CD4-positive, alpha-beta T cell (primary cell): ENCODE measurements at regions of chr6 and their contacts with region 1.

Region 1: GRCh38 chr6:13614926-13615798 is at the start of gene NOL7:
- DNase-seq: peak; percentile 97 to 99 (median 98)
- ATAC-seq: peak; percentile 91
- H3K4me3 ChIP-seq: peak within 1 kb of the TSS; percentile 80
- H3K4me3 Mint-ChIP-seq: peak within 1 kb of the TSS; percentile 94
- H3K27ac ChIP-seq: peak within 1 kb of the TSS; percentile 75 to 85
- H3K27ac Mint-ChIP-seq: peak within 1 kb of the TSS; percentile 93
- H3K4me1 ChIP-seq: peaks cover 26% of the 10 kb centered on the region
- H3K4me1 Mint-ChIP-seq: peaks cover 50% of the 10 kb centered on the region
- H3K27me3 ChIP-seq: no peaks in the 10 kb centered on the region
- H3K27me3 Mint-ChIP-seq: no peaks in the 10 kb centered on the region
- CTCF ChIP-seq: peak; percentile 85
- total RNA-seq, gene NOL7: 65.5 to 67.6 TPM

Region 2: GRCh38 chr6:13328076-13328874 is 286.9 kb before region 1 on chr6 and contains the start of gene TBC1D7:
- CTCF ChIA-PET with region 1: interaction called, 9 read pairs
- POLR2A ChIA-PET with region 1: interaction called, 22 read pairs
- intact Hi-C with region 1: loop called (anchors 5 kb)
- DNase-seq: peak; percentile 85 to 97 (median 92)
- ATAC-seq: peak; percentile 87
- H3K4me3 ChIP-seq: peak within 1 kb of the TSS; percentile 91
- H3K4me3 Mint-ChIP-seq: peak within 1 kb of the TSS; percentile 97
- H3K27ac ChIP-seq: peak within 1 kb of the TSS; percentile 88 to 95
- H3K27ac Mint-ChIP-seq: peak within 1 kb of the TSS; percentile 99
- H3K4me1 ChIP-seq: peaks cover 13% of the 10 kb centered on the region
- H3K4me1 Mint-ChIP-seq: peaks cover 38% of the 10 kb centered on the region
- H3K27me3 ChIP-seq: no peaks in the 10 kb centered on the region
- H3K27me3 Mint-ChIP-seq: no peaks in the 10 kb centered on the region
- CTCF ChIP-seq: no peak
- total RNA-seq, gene TBC1D7: 10.2 to 12.3 TPM

Region 3: GRCh38 chr6:13574149-13574570 is 41.0 kb before region 1 on chr6:
- CTCF ChIA-PET with region 1: interaction called, 59 read pairs
- POLR2A ChIA-PET with region 1: interaction called, 102 read pairs
- intact Hi-C with region 1: loop called (anchors 1 to 2 kb)
- DNase-seq: peak; percentile 85 to 98 (median 91)
- ATAC-seq: peak; percentile 79
- H3K4me3 ChIP-seq: peak overlapping the region; percentile 97
- H3K4me3 Mint-ChIP-seq: peak overlapping the region; percentile 98
- H3K27ac ChIP-seq: peak overlapping the region; percentile 82 to 86
- H3K27ac Mint-ChIP-seq: peak overlapping the region; percentile 99
- H3K4me1 ChIP-seq: peaks cover 14% of the 10 kb centered on the region
- H3K4me1 Mint-ChIP-seq: peaks cover 34% of the 10 kb centered on the region
- H3K27me3 ChIP-seq: no peaks in the 10 kb centered on the region
- H3K27me3 Mint-ChIP-seq: no peaks in the 10 kb centered on the region
- CTCF ChIP-seq: peak; percentile 72

Region 4: DNA sequence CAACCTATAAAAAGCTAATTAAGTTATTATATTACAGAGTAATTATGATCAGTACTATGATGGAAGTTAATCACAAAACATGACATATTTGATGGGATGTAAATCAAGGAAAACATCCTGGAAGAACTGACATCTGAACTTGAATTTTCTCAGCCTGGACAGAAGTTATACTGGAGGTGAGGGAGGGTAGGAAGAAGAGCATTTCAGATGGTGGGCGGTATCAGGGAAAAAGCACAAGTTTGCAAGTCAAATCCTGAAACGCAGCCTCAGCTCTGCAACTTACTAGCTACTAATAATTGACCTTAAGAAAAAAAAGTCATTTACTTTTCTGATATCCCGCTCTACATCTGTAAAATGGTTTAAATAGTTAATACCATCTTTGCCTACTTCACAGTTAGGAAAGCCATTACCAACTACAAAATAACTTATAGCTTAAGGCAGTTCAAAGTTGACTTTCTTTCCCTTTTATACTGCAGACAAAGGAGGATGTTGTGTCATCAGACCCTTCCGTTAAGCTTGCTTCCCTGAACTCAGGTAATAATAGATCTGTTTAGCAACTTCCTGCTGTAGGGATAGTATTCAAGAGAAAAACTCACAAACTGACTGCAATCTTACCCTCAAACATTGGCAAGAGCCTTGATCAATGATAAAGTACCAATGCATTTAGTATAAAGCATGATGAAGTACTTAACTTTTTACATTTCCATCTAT is 20.9 kb after region 1 on chr6:
- CTCF ChIA-PET with region 1: interaction called, 10 read pairs
- POLR2A ChIA-PET with region 1: interaction called, 22 read pairs
- intact Hi-C with region 1: no loop called
- DNase-seq: peak in 2 of 14 experiments; percentile 13 to 34
- ATAC-seq: peak; percentile 71
- H3K4me3 ChIP-seq: no peak overlapping the region
- H3K4me3 Mint-ChIP-seq: no peak overlapping the region
- H3K27ac ChIP-seq: peak overlapping the region in 1 of 2 donors; percentile 24
- H3K27ac Mint-ChIP-seq: peak overlapping the region; percentile 72
- H3K4me1 ChIP-seq: peaks cover 3% of the 10 kb centered on the region
- H3K4me1 Mint-ChIP-seq: peaks cover 44% of the 10 kb centered on the region
- H3K27me3 ChIP-seq: no peaks in the 10 kb centered on the region
- H3K27me3 Mint-ChIP-seq: no peaks in the 10 kb centered on the region
- CTCF ChIP-seq: no peak

Region 5: GRCh38 chr6:13687917-13688351 is 72.8 kb after region 1 on chr6:
- CTCF ChIA-PET with region 1: interaction called, 4 read pairs
- POLR2A ChIA-PET with region 1: interaction called, 24 read pairs
- intact Hi-C with region 1: no loop called
- DNase-seq: peak in 10 of 14 experiments; percentile 7 to 69 (median 28)
- ATAC-seq: peak; percentile 83
- H3K4me3 ChIP-seq: no peak overlapping the region
- H3K4me3 Mint-ChIP-seq: peak overlapping the region; percentile 79
- H3K27ac ChIP-seq: peak overlapping the region; percentile 64 to 83
- H3K27ac Mint-ChIP-seq: peak overlapping the region; percentile 87
- H3K4me1 ChIP-seq: peaks cover 43% of the 10 kb centered on the region
- H3K4me1 Mint-ChIP-seq: peaks cover 64% of the 10 kb centered on the region
- H3K27me3 ChIP-seq: no peaks in the 10 kb centered on the region
- H3K27me3 Mint-ChIP-seq: no peaks in the 10 kb centered on the region
- CTCF ChIP-seq: no peak

Region 6: GRCh38 chr6:13711733-13712598 is 96.8 kb after region 1 on chr6 and contains the start of gene RANBP9:
- CTCF ChIA-PET with region 1: interaction called, 19 read pairs
- POLR2A ChIA-PET with region 1: interaction called, 129 read pairs
- intact Hi-C with region 1: loop called (anchors 1 kb)
- DNase-seq: peak; percentile 76 to 95 (median 85)
- ATAC-seq: peak; percentile 81
- H3K4me3 ChIP-seq: peak within 1 kb of the TSS; percentile 80
- H3K4me3 Mint-ChIP-seq: peak within 1 kb of the TSS; percentile 96
- H3K27ac ChIP-seq: peak within 1 kb of the TSS; percentile 78 to 81
- H3K27ac Mint-ChIP-seq: peak within 1 kb of the TSS; percentile 98
- H3K4me1 ChIP-seq: peaks cover 26% of the 10 kb centered on the region
- H3K4me1 Mint-ChIP-seq: peaks cover 52% of the 10 kb centered on the region
- H3K27me3 ChIP-seq: no peaks in the 10 kb centered on the region
- H3K27me3 Mint-ChIP-seq: no peaks in the 10 kb centered on the region
- CTCF ChIP-seq: no peak
- total RNA-seq, gene RANBP9: 60.8 to 62.9 TPM

Region 7: GRCh38 chr6:13814176-13814937 is 199.2 kb after region 1 on chr6 and contains the start of gene MCUR1:
- CTCF ChIA-PET with region 1: interaction called, 9 read pairs
- POLR2A ChIA-PET with region 1: interaction called, 10 read pairs
- intact Hi-C with region 1: loop called in 1 of 2 experiments (anchors 5 kb)
- DNase-seq: peak; percentile 54 to 94 (median 73)
- ATAC-seq: peak; percentile 83
- H3K4me3 ChIP-seq: peak within 1 kb of the TSS; percentile 70
- H3K4me3 Mint-ChIP-seq: peak within 1 kb of the TSS; percentile 90
- H3K27ac ChIP-seq: peak within 1 kb of the TSS; percentile 72 to 80
- H3K27ac Mint-ChIP-seq: peak within 1 kb of the TSS; percentile 86
- H3K4me1 ChIP-seq: peaks cover 18% of the 10 kb centered on the region
- H3K4me1 Mint-ChIP-seq: peaks cover 37% of the 10 kb centered on the region
- H3K27me3 ChIP-seq: no peaks in the 10 kb centered on the region
- H3K27me3 Mint-ChIP-seq: no peaks in the 10 kb centered on the region
- CTCF ChIP-seq: peak; percentile 20
- total RNA-seq, gene MCUR1: 3.2 to 4.5 TPM